ENCODE measurements at regions of chr17 and their contacts with region 1.

Region 1: DNA sequence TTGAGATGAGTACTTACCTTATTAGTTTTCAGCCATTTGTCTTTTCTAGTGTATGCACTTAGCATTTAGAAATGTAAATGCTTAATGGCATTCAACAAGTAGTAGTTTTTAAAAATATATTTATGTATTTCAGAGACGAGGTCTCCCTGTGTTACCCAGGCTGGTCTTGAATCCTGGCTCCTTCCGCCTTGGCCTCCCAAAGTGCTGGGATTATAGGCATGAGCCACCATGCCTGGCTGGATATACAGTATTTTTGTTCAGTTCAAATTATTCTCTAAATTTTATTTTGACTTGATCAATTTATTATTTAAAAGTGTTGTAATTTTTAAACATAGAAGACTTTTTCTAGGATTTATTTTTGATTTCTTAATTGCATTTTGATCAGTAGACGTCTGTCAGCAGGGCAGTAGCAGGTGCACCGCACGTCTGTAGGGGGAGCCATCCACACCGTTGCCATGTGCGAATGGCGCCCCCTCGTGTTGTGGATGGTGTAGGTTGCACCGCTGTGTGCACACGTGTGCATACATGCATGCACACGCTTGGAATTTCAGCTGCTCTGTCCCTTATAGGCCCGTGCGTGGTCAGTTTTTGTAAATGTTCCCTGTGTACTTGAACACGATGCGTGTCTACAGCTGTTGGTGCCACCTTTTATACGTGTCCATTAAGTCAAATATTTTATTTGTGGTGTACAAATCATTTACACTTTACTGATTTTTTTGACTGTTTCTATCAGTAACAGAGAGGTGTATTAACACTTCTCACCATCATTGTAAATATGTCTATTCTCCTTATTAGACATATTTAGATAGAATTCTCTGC is 30.6 kb downstream of the RPTOR start:
- DNase-seq: peak; percentile 84
- H3K4me3 Mint-ChIP-seq: no peak overlapping the region
- H3K27ac Mint-ChIP-seq: peak overlapping the region; percentile 2
- H3K4me1 Mint-ChIP-seq: peaks cover 31% of the 10 kb centered on the region
- H3K27me3 Mint-ChIP-seq: no peaks in the 10 kb centered on the region

Region 2: GRCh38 chr17:80811181-80812105 is 236.2 kb after region 1 on chr17:
- intact Hi-C with region 1: no loop called
- DNase-seq: peak; percentile 27
- H3K4me3 Mint-ChIP-seq: peak overlapping the region; percentile 32
- H3K27ac Mint-ChIP-seq: peak overlapping the region; percentile 88
- H3K4me1 Mint-ChIP-seq: peaks cover 61% of the 10 kb centered on the region
- H3K27me3 Mint-ChIP-seq: no peaks in the 10 kb centered on the region

Region 3: DNA sequence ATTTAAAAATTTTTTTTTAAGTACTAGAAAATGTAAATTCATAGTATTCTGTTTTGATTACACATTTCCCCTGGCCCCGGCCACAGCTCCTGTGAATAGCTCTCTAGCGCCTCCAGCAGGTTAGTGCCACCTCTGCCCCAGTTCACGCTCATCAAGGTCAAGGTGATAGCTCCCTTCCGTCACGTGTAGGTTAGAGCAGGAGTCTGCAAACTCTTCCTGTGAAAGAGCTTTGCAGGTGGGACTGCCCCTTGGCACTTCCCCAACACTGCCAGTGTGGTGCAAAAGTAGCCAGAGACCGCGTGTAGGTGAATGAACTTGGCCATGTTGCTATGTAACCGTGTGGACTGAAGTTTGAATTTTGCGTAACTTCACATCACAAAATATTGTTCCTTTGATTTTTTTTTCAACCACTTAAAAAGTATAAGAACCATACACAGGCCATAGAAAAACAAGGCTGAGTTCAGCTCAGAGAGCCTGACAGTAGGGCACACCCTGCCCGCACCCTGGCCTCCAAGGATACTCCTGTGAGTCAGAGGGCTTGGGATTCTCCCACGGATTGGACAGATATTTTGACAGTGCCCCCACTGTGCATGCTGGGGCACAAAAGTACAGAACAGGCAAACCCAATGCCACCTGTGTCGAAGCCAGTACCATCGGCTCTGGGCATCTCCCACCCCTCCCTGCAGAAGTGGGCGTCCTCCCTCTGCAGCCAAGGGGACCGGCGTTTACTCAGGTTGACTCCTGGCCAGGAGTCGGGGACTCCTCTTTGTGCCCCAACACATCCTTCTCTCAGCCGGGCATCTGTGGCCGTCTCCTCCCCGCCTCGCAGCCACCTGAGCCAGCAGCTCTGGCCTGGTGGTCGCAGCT is 324.4 kb after region 1 on chr17:
- intact Hi-C with region 1: loop called (anchors 1 kb)
- DNase-seq: peak; percentile 72
- H3K4me3 Mint-ChIP-seq: no peak overlapping the region
- H3K27ac Mint-ChIP-seq: peak overlapping the region; percentile 48
- H3K4me1 Mint-ChIP-seq: peaks cover 56% of the 10 kb centered on the region
- H3K27me3 Mint-ChIP-seq: no peaks in the 10 kb centered on the region

Region 4: DNA sequence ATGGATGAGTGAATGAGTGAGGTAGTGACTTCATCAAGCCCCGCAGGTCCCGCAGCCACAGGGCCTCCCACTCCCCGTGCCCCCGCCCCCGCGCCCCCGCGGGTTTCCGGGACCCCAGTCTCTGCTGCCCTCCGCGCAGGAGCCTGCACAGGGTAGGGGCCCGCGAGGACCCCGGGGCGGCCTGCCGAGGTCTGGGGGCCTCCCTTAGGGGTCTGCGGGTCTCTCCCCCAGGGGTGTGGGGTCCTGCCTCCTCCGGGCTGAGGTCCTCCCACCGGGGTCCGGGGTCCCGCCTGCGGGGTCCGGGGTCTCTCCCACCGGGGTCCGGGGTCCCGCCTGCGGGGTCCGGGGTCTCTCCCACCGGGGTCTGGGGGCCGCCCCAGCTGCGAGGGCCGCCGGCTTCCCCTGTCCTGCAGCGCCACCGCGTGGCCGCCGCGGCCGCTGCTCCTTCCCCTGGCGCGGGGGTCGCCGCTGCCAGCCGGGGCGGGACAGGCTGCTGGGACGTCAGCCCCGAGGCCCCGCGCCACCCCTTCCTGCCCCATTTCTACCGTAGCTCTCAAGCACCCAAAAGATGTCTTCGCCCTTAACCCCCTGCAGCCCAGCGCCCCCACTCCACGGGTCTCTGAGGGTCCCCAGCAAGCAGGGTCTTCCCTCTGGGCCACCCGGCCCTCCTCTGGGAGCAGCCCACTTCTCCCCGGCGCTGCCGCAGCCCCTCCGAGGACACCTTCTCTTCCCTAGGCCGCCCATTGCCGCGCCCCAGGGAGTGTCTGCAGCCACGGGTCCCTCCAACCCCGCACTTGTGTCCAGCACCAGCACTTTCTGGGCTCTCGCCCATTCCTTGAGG is 406.0 kb after region 1 on chr17:
- intact Hi-C with region 1: loop called (anchors 10 kb)
- DNase-seq: no peak
- H3K4me3 Mint-ChIP-seq: no peak overlapping the region
- H3K27ac Mint-ChIP-seq: no peak overlapping the region
- H3K4me1 Mint-ChIP-seq: peaks cover 11% of the 10 kb centered on the region
- H3K27me3 Mint-ChIP-seq: peaks cover 9% of the 10 kb centered on the region